Breast epithelium (tissue), 4 donors: ENCODE measurements at regions of chr13 and their contacts with region 1.

Region 1: GRCh38 chr13:20713751-20714150 is 10.3 kb downstream of the IL17D start:
- DNase-seq: no peak
- H3K4me3 ChIP-seq: no peak overlapping the region
- H3K27ac ChIP-seq: no peak overlapping the region
- H3K4me1 ChIP-seq: no peaks in the 10 kb centered on the region
- H3K27me3 ChIP-seq: no peaks in the 10 kb centered on the region
- CTCF ChIP-seq: no peak
- POLR2A ChIP-seq: no peak

Region 2: GRCh38 chr13:20378721-20379120 is 335.0 kb before region 1 on chr13:
- intact Hi-C with region 1: no loop called
- DNase-seq: no peak
- H3K4me3 ChIP-seq: no peak overlapping the region
- H3K27ac ChIP-seq: no peak overlapping the region
- H3K4me1 ChIP-seq: no peaks in the 10 kb centered on the region
- H3K27me3 ChIP-seq: no peaks in the 10 kb centered on the region
- CTCF ChIP-seq: no peak
- POLR2A ChIP-seq: no peak

Region 3: GRCh38 chr13:20843166-20843565 is 129.4 kb after region 1 on chr13:
- intact Hi-C with region 1: loop called (anchors 10 kb)
- DNase-seq: no peak
- H3K4me3 ChIP-seq: no peak overlapping the region
- H3K27ac ChIP-seq: no peak overlapping the region
- H3K4me1 ChIP-seq: no peaks in the 10 kb centered on the region
- H3K27me3 ChIP-seq: no peaks in the 10 kb centered on the region
- CTCF ChIP-seq: no peak
- POLR2A ChIP-seq: no peak